ENCODE measurements at regions of chr18 and their contacts with region 1.

Region 1: DNA sequence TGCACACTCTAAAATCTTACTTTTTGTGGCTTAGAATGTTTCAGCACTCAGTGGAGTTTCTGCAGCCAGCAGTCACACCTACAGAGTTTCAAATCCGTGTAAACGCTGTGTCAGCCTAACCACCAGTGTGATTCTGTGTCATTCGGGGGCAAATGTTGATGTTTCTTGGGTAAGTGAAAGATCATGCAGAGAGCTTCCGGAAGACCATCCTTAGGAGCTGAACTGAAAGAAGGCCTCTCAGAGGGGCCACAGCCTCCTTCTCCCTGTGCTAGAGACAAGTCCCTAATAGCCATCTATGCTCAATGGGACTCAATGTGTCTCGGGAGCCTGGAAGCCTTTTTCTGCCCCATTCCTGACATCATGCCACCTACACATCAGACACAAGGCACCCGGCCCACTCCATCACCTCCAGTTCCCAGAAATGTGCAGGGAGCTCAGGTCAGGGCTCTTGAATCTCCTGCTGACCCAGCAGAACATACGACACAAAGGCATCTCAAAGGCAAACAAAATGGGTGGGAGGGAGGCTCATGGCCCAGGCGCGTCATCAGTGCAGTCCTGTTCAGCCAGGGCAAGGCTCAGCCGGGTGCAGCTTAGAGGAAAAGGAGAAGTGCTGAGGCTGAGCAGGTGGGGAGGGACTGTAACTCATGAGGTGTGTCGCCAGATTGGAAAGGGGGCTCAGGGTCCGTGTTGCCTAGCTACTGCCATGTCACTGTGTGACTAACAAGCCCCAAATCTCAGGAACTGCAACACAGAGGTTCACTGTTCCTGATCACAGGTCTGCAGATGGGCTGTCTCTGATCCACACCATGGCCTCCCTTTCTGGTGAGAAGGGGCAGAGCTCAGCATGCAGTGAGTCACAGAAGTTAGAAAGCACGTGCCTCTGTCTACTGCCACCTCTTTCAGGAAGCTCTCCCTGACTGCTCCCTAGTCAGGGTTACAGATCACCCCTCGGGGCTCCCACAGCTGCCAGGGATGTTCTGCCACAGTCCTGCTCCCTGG is 82.0 kb downstream of the SMAD7 start:
- DNase-seq: peak; percentile 87
- H3K4me3 Mint-ChIP-seq: peak overlapping the region; percentile 57
- H3K27ac Mint-ChIP-seq: peak overlapping the region; percentile 99
- H3K4me1 Mint-ChIP-seq: peaks cover 38% of the 10 kb centered on the region
- H3K27me3 Mint-ChIP-seq: no peaks in the 10 kb centered on the region

Region 2: GRCh38 chr18:47413327-47413726 is 1455.4 kb before region 1 on chr18:
- CTCF ChIA-PET with region 1: no interaction called
- POLR2A ChIA-PET with region 1: no interaction called
- intact Hi-C with region 1: no loop called
- DNase-seq: no peak
- H3K4me3 Mint-ChIP-seq: no peak overlapping the region
- H3K27ac Mint-ChIP-seq: no peak overlapping the region
- H3K4me1 Mint-ChIP-seq: no peaks in the 10 kb centered on the region
- H3K27me3 Mint-ChIP-seq: peaks cover 24% of the 10 kb centered on the region

Region 3: DNA sequence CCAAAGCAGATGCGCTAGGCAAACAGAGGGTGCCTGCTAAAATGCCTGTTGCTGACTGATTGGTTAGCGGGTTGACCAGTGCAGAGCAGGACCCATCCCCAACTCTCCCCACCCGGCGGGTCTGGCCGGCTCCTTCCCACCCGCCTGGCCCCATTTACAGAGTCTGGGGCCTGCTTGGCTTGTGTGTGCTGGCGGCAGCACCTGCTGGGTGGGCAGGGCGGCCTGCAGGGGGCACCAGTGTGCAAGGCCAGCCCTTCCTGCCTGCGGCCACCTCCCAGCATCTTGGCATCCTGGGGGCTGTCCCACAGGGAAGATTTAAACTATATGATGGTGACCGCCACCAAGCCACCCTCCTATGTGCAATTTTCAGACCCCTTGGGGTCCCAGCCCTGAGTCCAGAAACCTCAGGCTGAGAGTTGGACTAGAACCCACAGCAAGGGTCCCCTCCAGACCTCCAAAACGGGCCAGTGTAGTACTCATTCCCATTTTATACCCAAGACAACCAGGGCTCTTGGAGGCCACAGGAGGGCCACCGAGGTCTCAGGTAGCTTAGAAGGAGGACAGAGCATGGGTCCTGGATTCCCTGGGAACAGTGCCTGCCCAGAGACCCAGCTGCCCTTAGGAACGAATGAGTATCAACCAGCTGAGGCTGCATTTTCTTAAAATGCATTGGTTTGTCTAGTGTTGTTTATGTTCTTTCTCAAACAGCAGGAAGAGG is 91.6 kb before region 1 on chr18:
- CTCF ChIA-PET with region 1: interaction called, 14 read pairs
- POLR2A ChIA-PET with region 1: interaction called, 5 read pairs
- intact Hi-C with region 1: no loop called
- DNase-seq: peak; percentile 80
- H3K4me3 Mint-ChIP-seq: no peak overlapping the region
- H3K27ac Mint-ChIP-seq: no peak overlapping the region
- H3K4me1 Mint-ChIP-seq: peaks cover 7% of the 10 kb centered on the region
- H3K27me3 Mint-ChIP-seq: no peaks in the 10 kb centered on the region

Region 4: DNA sequence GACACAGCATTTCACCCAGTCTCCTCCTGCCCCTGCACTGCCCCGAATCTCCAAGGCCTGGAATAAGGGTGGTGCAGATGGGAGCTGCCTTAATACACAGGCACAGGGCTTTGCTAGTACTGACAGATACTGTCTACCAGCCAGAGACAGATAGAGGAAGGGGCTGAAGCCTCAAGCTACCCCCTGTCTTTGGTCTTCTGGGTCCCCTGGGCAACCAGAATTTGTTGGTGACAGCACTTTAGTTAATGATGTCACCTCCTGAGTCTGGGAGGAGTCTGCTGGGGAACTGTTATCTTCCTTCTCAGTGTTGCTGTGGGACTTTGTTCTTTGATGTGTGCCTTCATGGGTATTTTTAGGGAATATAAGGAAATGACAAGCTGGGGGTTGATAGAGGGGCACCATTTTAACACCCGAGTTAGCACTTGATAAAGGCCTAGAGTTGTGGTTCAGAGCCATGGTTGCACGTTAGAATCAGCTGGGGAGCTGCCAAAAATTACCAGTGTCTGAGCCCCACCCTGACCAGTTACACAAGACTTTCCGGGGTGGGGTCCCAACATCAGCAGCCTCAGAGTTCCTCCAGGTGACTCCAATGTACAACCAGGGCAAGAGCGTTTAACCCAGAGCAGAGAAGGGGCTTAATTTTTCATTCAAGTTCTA is 54.8 kb before region 1 on chr18:
- CTCF ChIA-PET with region 1: no interaction called
- POLR2A ChIA-PET with region 1: interaction called, 6 read pairs
- intact Hi-C with region 1: loop called (anchors 1 kb)
- DNase-seq: peak; percentile 37
- H3K4me3 Mint-ChIP-seq: no peak overlapping the region
- H3K27ac Mint-ChIP-seq: peak overlapping the region; percentile 80
- H3K4me1 Mint-ChIP-seq: peaks cover 49% of the 10 kb centered on the region
- H3K27me3 Mint-ChIP-seq: no peaks in the 10 kb centered on the region

Region 5: DNA sequence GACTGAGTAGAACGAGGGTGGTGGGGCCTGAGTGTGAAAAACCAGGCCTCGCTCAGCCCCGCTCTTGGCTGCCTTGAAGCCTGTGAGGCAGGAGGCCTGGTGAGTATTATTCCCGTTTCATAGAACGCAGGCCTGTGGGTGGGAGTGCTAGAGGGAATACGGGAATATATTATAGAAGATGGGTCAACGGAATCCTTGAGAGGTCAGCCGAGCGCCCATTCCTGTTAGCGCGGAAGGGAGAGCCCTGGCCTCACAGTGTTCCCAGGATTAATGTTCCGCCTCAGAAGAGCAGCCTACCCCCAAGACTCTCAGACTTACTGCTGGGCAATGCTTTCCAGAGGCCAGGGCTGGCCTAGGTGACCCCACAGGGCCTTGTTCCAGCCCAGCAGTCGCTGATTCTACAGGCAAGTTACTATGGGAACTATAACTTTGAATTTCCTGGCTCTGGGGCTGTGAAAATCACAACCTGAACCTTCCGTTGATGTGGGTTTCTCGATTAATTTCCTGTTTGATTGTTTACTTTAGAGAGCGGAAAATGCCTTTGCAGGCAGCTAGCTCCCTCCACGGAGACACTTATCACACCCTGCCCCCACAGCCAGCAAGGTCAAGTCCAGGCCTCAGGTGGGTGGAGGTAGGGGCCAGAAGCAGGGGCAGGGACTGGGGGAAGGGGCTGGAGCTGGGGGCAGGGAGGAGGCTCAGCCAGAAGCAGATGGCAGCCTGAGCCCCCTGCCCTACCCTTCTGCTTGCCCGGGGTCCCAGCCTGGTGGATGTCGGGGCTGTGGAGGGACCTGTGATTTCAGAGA is 26.3 kb before region 1 on chr18:
- CTCF ChIA-PET with region 1: no interaction called
- POLR2A ChIA-PET with region 1: interaction called, 4 read pairs
- intact Hi-C with region 1: loop called (anchors 1 kb)
- DNase-seq: peak; percentile 63
- H3K4me3 Mint-ChIP-seq: no peak overlapping the region
- H3K27ac Mint-ChIP-seq: peak overlapping the region; percentile 65
- H3K4me1 Mint-ChIP-seq: peaks cover 66% of the 10 kb centered on the region
- H3K27me3 Mint-ChIP-seq: no peaks in the 10 kb centered on the region

Region 6: DNA sequence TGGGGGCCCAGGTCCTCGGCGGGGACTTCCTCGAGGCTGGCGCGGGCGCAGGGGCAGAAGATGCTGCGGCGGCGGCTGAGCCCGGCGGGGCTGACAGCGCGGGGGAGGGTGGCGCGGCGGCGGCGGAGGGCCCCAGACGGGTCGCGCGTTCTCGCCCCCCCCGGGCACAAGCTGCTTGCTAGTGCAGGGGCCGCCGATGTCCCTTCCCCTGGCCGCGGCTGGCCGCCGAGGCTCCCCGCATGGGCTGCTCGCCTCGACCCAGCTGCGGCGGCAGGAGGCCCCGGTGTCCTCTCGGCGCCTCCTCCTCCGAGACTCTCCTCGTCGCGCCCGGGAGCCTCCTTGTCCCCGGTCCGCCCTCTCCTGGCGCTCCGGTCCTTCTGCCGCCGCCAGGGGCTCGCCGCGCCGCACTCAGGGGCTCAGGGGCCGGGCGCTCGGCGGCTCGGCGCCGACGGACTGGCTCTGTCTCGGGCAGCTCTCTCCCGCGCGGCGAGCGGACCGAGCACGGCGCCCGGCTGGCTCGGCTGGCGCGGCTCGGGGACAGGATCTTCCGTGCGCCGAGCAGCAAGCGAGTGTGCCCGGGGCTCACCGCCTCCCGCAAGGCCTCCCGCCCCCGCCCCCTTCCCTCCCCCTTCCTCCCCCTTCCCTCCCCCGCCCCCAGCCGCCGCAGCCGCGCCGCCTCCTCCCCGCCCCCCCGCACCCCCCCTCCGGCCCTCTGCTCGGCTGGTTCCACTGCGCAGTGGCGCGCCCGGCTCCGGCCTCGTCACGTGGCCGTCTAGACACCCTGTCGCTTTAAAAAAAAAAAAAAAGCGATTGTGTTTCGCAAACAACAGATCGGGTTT is 82.9 kb after region 1 on chr18:
- CTCF ChIA-PET with region 1: interaction called, 3 read pairs
- POLR2A ChIA-PET with region 1: interaction called, 6 read pairs
- intact Hi-C with region 1: loop called (anchors 1 kb)
- DNase-seq: peak; percentile 82
- H3K4me3 Mint-ChIP-seq: peak overlapping the region; percentile 85
- H3K27ac Mint-ChIP-seq: peak overlapping the region; percentile 76
- H3K4me1 Mint-ChIP-seq: peaks cover 32% of the 10 kb centered on the region
- H3K27me3 Mint-ChIP-seq: no peaks in the 10 kb centered on the region

Region 7: GRCh38 chr18:49459404-49460171 is 590.8 kb after region 1 on chr18:
- CTCF ChIA-PET with region 1: no interaction called
- POLR2A ChIA-PET with region 1: no interaction called
- intact Hi-C with region 1: loop called (anchors 1 kb)
- DNase-seq: peak; percentile 52
- H3K4me3 Mint-ChIP-seq: peak overlapping the region; percentile 71
- H3K27ac Mint-ChIP-seq: peak overlapping the region; percentile 29
- H3K4me1 Mint-ChIP-seq: peaks cover 43% of the 10 kb centered on the region
- H3K27me3 Mint-ChIP-seq: no peaks in the 10 kb centered on the region

Measured in activated CD4-positive, alpha-beta memory T cell treated with anti-CD3 and anti-CD28 coated beads for 36 hours (primary cell).